ENCODE measurements at regions of chrX and their contacts with region 1.

Region 1: DNA sequence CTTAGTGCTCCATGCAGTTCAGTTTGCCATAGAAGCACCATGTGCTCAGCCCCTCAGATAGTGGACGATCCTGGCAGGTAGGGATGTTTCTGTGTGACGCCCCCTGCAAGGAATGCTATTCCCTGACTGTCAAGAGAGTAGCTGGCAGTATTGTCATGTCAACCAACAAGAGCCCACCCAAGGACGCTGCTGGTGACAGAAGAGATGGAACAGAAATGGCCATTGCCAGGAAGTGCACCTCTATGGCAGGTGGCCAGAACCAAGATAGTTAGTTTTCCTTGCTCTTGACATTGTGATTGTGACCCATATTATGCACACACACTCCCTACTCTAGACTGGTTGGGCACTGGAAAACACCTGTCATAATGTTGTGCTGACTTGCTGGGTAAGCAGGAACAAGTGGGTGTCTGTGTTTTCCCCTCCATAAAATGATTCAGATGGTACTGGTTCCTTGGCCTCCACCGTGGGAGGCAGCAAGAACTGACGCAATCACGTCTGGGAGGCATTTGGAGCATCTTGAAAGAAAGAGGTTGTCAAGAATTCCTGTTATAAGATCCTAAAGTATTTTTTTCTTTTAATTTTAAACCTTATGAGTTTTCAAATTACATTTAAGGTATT is 507.9 kb downstream of the MID1IP1 start:
- DNase-seq: peak in 10 of 14 experiments; percentile 2 to 77 (median 32)
- ATAC-seq: peak; percentile 76
- H3K4me3 ChIP-seq: no peak overlapping the region
- H3K4me3 Mint-ChIP-seq: peak overlapping the region; percentile 79
- H3K27ac ChIP-seq: peak overlapping the region; percentile 85 to 90
- H3K27ac Mint-ChIP-seq: peak overlapping the region; percentile 99
- H3K4me1 ChIP-seq: peaks cover 50% of the 10 kb centered on the region
- H3K4me1 Mint-ChIP-seq: peaks cover 73% of the 10 kb centered on the region
- H3K27me3 ChIP-seq: no peaks in the 10 kb centered on the region
- H3K27me3 Mint-ChIP-seq: no peaks in the 10 kb centered on the region
- CTCF ChIP-seq: no peak

Region 2: DNA sequence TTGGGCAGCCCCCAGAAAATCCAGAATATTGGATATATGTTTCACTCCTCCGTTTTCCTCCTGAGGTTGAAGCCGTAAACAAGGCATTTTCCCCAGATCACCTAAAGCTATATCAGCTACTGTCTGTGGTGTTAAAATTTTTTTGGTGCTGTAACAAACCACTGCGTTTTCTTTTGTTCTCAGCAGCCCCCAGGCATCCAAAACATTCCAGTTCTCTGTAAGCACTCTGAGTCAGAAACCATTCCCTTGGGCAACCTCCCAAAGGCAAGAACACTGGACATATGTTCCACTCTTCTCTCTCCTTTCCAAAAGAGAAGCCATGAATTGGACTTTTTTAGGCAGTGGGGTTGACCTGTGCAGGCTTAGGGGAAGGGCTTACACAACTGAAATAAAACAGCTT is 197.0 kb before region 1 on chrX:
- CTCF ChIA-PET with region 1: no interaction called
- POLR2A ChIA-PET with region 1: no interaction called
- intact Hi-C with region 1: no loop called
- DNase-seq: no peak
- ATAC-seq: no peak
- H3K4me3 ChIP-seq: no peak overlapping the region
- H3K4me3 Mint-ChIP-seq: no peak overlapping the region
- H3K27ac ChIP-seq: no peak overlapping the region
- H3K27ac Mint-ChIP-seq: no peak overlapping the region
- H3K4me1 ChIP-seq: no peaks in the 10 kb centered on the region
- H3K4me1 Mint-ChIP-seq: no peaks in the 10 kb centered on the region
- H3K27me3 ChIP-seq: no peaks in the 10 kb centered on the region
- H3K27me3 Mint-ChIP-seq: peaks cover 4% of the 10 kb centered on the region
- CTCF ChIP-seq: no peak

Region 3: DNA sequence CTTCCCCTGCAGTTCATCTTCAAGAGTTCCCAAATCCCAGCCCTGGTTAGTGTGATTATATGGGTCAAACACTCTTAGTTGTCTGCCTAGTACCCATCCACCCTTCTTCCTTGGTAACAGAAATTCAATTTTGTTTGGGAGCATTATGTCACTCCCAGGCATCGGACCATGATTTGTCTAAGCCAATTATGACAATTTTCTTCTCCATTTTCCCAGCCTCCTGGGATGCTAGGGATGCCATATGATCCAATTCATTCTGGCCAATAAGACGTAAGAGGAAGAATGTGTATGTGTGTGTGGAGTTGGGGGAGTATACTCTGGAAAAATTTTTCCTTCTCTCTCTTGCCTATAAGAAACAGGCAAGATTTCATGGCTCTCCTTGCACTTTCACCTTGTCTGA is 42.0 kb before region 1 on chrX:
- CTCF ChIA-PET with region 1: no interaction called
- POLR2A ChIA-PET with region 1: no interaction called
- intact Hi-C with region 1: no loop called
- DNase-seq: no peak
- ATAC-seq: no peak
- H3K4me3 ChIP-seq: no peak overlapping the region
- H3K4me3 Mint-ChIP-seq: no peak overlapping the region
- H3K27ac ChIP-seq: no peak overlapping the region
- H3K27ac Mint-ChIP-seq: no peak overlapping the region
- H3K4me1 ChIP-seq: no peaks in the 10 kb centered on the region
- H3K4me1 Mint-ChIP-seq: peaks cover 9% of the 10 kb centered on the region
- H3K27me3 ChIP-seq: no peaks in the 10 kb centered on the region
- H3K27me3 Mint-ChIP-seq: no peaks in the 10 kb centered on the region
- CTCF ChIP-seq: no peak

Region 4: DNA sequence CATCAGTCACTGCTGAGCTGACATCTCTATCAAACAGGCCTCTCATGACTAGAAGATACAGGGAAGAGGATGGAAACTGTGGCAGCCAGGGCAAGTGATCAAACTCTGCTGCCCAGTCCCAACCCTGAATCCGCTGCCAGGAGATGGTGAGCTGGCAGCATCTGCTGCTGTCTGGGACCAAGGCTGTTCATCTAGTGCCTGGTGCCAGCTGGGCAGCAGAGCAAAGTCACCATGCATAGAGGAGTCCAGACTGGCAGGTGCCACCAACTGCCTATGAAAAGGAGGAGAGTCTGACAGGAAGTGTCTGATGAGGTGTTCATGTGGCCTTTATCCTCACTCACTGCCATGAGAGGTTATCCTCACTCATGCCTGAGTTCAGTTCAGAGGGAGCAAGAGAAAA is 11.0 kb after region 1 on chrX:
- CTCF ChIA-PET with region 1: no interaction called
- POLR2A ChIA-PET with region 1: interaction called, 27 read pairs
- intact Hi-C with region 1: no loop called
- DNase-seq: no peak
- ATAC-seq: no peak
- H3K4me3 ChIP-seq: no peak overlapping the region
- H3K4me3 Mint-ChIP-seq: no peak overlapping the region
- H3K27ac ChIP-seq: no peak overlapping the region
- H3K27ac Mint-ChIP-seq: peak overlapping the region; percentile 16
- H3K4me1 ChIP-seq: peaks cover 13% of the 10 kb centered on the region
- H3K4me1 Mint-ChIP-seq: peaks cover 51% of the 10 kb centered on the region
- H3K27me3 ChIP-seq: no peaks in the 10 kb centered on the region
- H3K27me3 Mint-ChIP-seq: no peaks in the 10 kb centered on the region
- CTCF ChIP-seq: no peak

Region 5: GRCh38 chrX:39327255-39327654 is 18.1 kb after region 1 on chrX:
- CTCF ChIA-PET with region 1: no interaction called
- POLR2A ChIA-PET with region 1: interaction called, 27 read pairs
- intact Hi-C with region 1: loop called in 1 of 2 experiments (anchors 2 kb)
- DNase-seq: peak in 9 of 14 experiments; percentile 11 to 66 (median 35)
- ATAC-seq: peak; percentile 85
- H3K4me3 ChIP-seq: peak overlapping the region; percentile 19
- H3K4me3 Mint-ChIP-seq: peak overlapping the region; percentile 62
- H3K27ac ChIP-seq: peak overlapping the region in 1 of 2 donors; percentile 62
- H3K27ac Mint-ChIP-seq: peak overlapping the region; percentile 94
- H3K4me1 ChIP-seq: peaks cover 10% of the 10 kb centered on the region
- H3K4me1 Mint-ChIP-seq: peaks cover 63% of the 10 kb centered on the region
- H3K27me3 ChIP-seq: no peaks in the 10 kb centered on the region
- H3K27me3 Mint-ChIP-seq: no peaks in the 10 kb centered on the region
- CTCF ChIP-seq: no peak

Region 6: GRCh38 chrX:39372115-39372514 is 63.0 kb after region 1 on chrX:
- CTCF ChIA-PET with region 1: no interaction called
- POLR2A ChIA-PET with region 1: no interaction called
- intact Hi-C with region 1: no loop called
- DNase-seq: no peak
- ATAC-seq: no peak
- H3K4me3 ChIP-seq: no peak overlapping the region
- H3K4me3 Mint-ChIP-seq: no peak overlapping the region
- H3K27ac ChIP-seq: no peak overlapping the region
- H3K27ac Mint-ChIP-seq: no peak overlapping the region
- H3K4me1 ChIP-seq: no peaks in the 10 kb centered on the region
- H3K4me1 Mint-ChIP-seq: no peaks in the 10 kb centered on the region
- H3K27me3 ChIP-seq: no peaks in the 10 kb centered on the region
- H3K27me3 Mint-ChIP-seq: no peaks in the 10 kb centered on the region
- CTCF ChIP-seq: no peak

Region 7: GRCh38 chrX:39427906-39428305 is 118.8 kb after region 1 on chrX:
- CTCF ChIA-PET with region 1: no interaction called
- POLR2A ChIA-PET with region 1: no interaction called
- intact Hi-C with region 1: loop called in 1 of 2 experiments (anchors 10 kb)
- DNase-seq: peak in 2 of 14 experiments; percentile 10 to 36
- ATAC-seq: peak; percentile 44
- H3K4me3 ChIP-seq: no peak overlapping the region
- H3K4me3 Mint-ChIP-seq: no peak overlapping the region
- H3K27ac ChIP-seq: no peak overlapping the region
- H3K27ac Mint-ChIP-seq: peak overlapping the region; percentile 64
- H3K4me1 ChIP-seq: peaks cover 10% of the 10 kb centered on the region
- H3K4me1 Mint-ChIP-seq: peaks cover 36% of the 10 kb centered on the region
- H3K27me3 ChIP-seq: no peaks in the 10 kb centered on the region
- H3K27me3 Mint-ChIP-seq: no peaks in the 10 kb centered on the region
- CTCF ChIP-seq: no peak